Activated CD4-positive, alpha-beta memory T cell treated with anti-CD3 and anti-CD28 coated beads, Interleukin-2, amount 10 ng/mL, durations not matched to agents 7 days and 5 days (primary cell): ENCODE measurements at regions of chr2 and their contacts with region 1.

Region 1: GRCh38 chr2:101349893-101350662 is 37.2 kb downstream of the CREG2 start:
- DNase-seq: peak; percentile 46
- H3K4me3 Mint-ChIP-seq: no peak overlapping the region
- H3K27ac Mint-ChIP-seq: no peak overlapping the region
- H3K4me1 Mint-ChIP-seq: peaks cover 17% of the 10 kb centered on the region
- H3K27me3 Mint-ChIP-seq: peaks cover 17% of the 10 kb centered on the region

Region 2: DNA sequence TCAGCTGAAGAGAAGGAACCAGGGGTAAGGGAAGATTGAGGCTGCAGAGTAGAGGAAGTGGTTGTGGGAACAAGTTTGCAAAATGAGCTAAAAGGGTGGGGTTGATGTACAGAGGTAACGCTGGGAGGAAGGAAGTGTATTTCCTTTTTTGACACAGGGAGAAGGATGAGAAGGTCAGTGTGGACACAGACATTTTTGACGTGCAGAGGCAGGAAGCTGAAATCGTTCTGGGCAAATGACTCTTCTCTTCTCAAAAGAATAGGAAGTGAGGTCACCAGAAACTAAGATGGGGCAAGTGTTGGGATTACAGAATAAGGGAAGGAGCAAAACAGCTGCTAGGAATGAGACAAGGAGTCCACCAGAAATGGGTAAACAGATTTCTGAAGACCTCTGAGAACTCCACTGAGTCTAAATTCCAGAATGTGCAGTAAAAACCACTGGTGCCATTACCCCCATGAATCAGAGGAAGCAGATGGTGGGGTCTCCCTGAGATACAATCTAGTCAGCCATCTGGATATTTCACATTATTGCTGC is 21.5 kb before region 1 on chr2:
- CTCF ChIA-PET with region 1: interaction called, 105 read pairs
- POLR2A ChIA-PET with region 1: interaction called, 13 read pairs
- DNase-seq: peak; percentile 69
- H3K4me3 Mint-ChIP-seq: no peak overlapping the region
- H3K27ac Mint-ChIP-seq: no peak overlapping the region
- H3K4me1 Mint-ChIP-seq: peaks cover 10% of the 10 kb centered on the region
- H3K27me3 Mint-ChIP-seq: no peaks in the 10 kb centered on the region

Region 3: DNA sequence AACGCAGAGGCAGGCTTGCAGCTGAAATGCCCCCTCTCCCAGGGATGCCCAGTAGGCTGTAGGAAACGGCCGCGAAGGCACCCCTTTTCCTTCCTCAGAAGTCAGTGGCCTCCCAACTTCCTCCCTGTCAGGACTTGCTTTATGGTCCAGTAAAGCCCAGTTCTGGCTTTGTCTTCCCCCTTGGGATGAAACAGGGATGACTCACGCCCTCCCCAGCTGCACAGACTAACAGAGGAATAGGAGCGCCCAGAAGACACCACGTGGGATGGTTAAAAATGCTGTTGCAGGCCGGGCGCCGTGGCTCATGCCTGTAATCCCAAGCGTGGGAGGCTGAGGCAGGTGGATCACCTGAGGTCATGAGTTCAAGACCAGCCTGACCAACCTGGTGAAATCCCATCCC is 30.3 kb after region 1 on chr2:
- CTCF ChIA-PET with region 1: interaction called, 70 read pairs
- POLR2A ChIA-PET with region 1: no interaction called
- DNase-seq: no peak
- H3K4me3 Mint-ChIP-seq: no peak overlapping the region
- H3K27ac Mint-ChIP-seq: no peak overlapping the region
- H3K4me1 Mint-ChIP-seq: no peaks in the 10 kb centered on the region
- H3K27me3 Mint-ChIP-seq: peaks cover 28% of the 10 kb centered on the region

Region 4: GRCh38 chr2:101387151-101387807 is 37.2 kb after region 1 on chr2 and contains the start of gene CREG2:
- CTCF ChIA-PET with region 1: interaction called, 70 read pairs
- POLR2A ChIA-PET with region 1: interaction called, 15 read pairs
- DNase-seq: peak; percentile 69
- H3K4me3 Mint-ChIP-seq: peak within 1 kb of the TSS; percentile 60
- H3K27ac Mint-ChIP-seq: no peak within 1 kb of the TSS
- H3K4me1 Mint-ChIP-seq: peaks cover 11% of the 10 kb centered on the region
- H3K27me3 Mint-ChIP-seq: peaks cover 58% of the 10 kb centered on the region
- total RNA-seq, gene CREG2: 0.65 to 0.98 TPM